Heart right ventricle (tissue), 16 donors: ENCODE measurements at regions of chr7 and their contacts with region 1.

Region 1: GRCh38 chr7:100852048-100852872 is at the start of gene SLC12A9:
- DNase-seq: peak; percentile 90 to 92
- ATAC-seq: peak; percentile 99 to 100 (median 99)
- H3K4me3 ChIP-seq: peak within 1 kb of the TSS; percentile 52 to 91 (median 72)
- H3K27ac ChIP-seq: peak within 1 kb of the TSS in 9 of 10 donors; percentile 54 to 90 (median 70)
- H3K4me1 ChIP-seq: peaks cover 8 to 21% (median 16%) of the 10 kb centered on the region in 9 donors
- H3K27me3 ChIP-seq: no peaks in the 10 kb centered on the region
- CTCF ChIP-seq: peak; percentile 76 to 99 (median 95)
- total RNA-seq, gene SLC12A9: 4.8 to 15.7 (median 6.9) TPM

Region 2: GRCh38 chr7:100705753-100706671 is 146.2 kb before region 1 on chr7 and contains the start of gene POP7:
- intact Hi-C with region 1: loop called in 9 of 10 experiments (anchors 2 to 10 kb)
- DNase-seq: peak; percentile 99
- ATAC-seq: peak; percentile 97 to 99 (median 98)
- H3K4me3 ChIP-seq: peak within 1 kb of the TSS; percentile 63 to 95 (median 77)
- H3K27ac ChIP-seq: peak within 1 kb of the TSS; percentile 84 to 99 (median 94)
- H3K4me1 ChIP-seq: peaks cover 4 to 24% (median 17%) of the 10 kb centered on the region in 9 donors
- H3K27me3 ChIP-seq: no peaks in the 10 kb centered on the region
- CTCF ChIP-seq: no peak
- total RNA-seq, gene POP7: 23.2 to 34.9 (median 25.3) TPM

Region 3: DNA sequence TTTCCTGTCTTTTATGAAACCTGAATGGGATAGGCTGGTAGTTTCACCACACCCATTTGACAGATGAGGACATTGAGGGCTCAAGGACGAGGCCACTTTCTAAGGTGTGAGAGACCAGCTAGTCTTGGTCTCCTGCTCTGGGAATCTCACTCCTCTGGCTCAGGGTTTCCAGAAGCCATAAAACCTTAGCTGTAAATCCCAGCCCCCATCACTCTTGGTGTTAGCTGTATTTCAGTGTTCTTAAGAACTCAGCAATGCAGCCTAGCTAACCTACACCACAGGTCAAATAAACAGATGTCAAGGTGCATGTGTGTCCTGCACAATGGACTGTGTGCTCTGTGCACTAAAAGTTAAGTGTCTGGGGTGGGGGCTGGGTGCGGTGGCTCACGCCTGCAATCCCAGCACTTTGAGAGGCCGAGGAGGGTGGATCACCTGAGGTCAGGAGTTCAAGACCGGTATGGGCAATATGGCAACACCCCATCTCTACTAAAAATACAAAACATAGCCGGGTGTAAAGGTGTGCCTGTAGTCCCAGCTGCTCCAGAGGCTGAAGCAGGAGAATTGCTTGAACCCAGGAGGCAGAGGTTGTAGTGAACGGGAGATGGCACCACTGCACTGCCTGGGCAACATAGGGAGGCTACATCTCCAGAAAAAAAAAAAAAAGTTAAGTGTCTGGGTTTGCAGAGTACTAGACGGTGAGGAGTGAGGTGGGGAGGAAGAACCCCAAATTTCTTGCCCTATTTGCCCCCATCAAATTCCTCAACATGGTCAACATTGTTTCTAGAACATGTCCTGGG is 132.5 kb before region 1 on chr7:
- intact Hi-C with region 1: loop called in 2 of 10 experiments (anchors 10 kb)
- DNase-seq: no peak
- ATAC-seq: no peak
- H3K4me3 ChIP-seq: no peak overlapping the region
- H3K27ac ChIP-seq: no peak overlapping the region
- H3K4me1 ChIP-seq: peaks cover 0 to 12% (median 0%) of the 10 kb centered on the region in 9 donors
- H3K27me3 ChIP-seq: peaks cover 4 to 61% (median 53%) of the 10 kb centered on the region in 7 donors
- CTCF ChIP-seq: no peak

Region 4: GRCh38 chr7:100781255-100781654 is 71.0 kb before region 1 on chr7:
- intact Hi-C with region 1: no loop called
- DNase-seq: no peak
- ATAC-seq: no peak
- H3K4me3 ChIP-seq: no peak overlapping the region
- H3K27ac ChIP-seq: no peak overlapping the region
- H3K4me1 ChIP-seq: no peaks in the 10 kb centered on the region
- H3K27me3 ChIP-seq: peaks cover 0 to 51% (median 22%) of the 10 kb centered on the region in 7 donors
- CTCF ChIP-seq: no peak

Region 5: GRCh38 chr7:100803398-100804233 is 48.6 kb before region 1 on chr7:
- intact Hi-C with region 1: loop called (anchors 1 to 5 kb)
- DNase-seq: peak; percentile 54 to 85
- ATAC-seq: peak; percentile 73 to 89 (median 82)
- H3K4me3 ChIP-seq: peak overlapping the region in 6 of 10 donors; percentile 7 to 29 (median 22)
- H3K27ac ChIP-seq: peak overlapping the region; percentile 26 to 63 (median 52)
- H3K4me1 ChIP-seq: peaks cover 18 to 62% (median 28%) of the 10 kb centered on the region in 9 donors
- H3K27me3 ChIP-seq: peaks cover 0 to 15% (median 3%) of the 10 kb centered on the region in 7 donors
- CTCF ChIP-seq: no peak

Region 6: DNA sequence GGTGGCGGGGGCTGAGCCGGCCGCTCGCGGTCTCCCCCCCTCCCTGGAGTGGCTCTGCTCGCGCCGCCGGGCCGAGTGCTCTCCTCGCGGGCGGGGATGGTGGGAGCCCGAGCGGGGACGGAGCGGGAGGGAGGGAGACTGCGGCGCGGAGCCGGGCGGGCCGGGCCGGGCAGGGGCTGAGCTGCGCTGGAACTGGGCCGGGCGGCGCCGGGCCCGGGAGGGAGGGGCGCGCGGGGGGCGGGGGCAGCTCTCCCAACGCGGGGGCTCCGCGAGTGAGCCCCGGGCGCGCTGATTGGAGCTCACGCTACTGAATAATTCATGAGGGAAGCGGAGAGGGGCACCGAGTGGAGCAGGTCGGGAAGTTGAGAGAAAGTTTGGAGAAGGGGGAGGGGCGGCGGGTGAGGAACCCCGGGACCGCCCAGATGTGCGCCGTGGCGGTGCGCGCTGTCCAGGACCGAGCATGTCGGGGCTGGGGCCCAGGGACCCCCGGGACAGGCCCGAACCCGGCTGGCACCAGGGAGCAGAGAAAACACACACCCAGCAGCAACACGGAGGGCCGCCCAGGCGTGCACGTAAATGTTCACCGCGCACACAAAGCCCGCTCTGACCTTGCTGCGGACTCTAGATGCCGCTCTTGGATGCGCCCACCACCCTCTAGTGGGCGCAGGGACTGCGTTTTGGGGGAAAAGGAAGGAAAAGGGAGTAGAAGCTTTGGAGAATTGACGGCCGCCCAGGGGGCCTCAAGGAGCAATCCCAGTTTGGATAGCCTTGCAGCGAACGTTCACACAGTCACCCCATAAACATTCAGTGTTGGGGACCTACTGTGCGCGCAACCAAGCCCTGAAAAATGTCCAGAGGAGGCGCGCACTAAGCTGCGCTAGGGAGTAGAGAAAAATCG is 24.7 kb before region 1 on chr7 and contains the start of gene EPHB4:
- intact Hi-C with region 1: loop called in 1 of 10 experiments (anchors 1 kb)
- DNase-seq: peak; percentile 84 to 90
- ATAC-seq: peak; percentile 61 to 80 (median 76)
- H3K4me3 ChIP-seq: peak within 1 kb of the TSS; percentile 42 to 89 (median 74)
- H3K27ac ChIP-seq: peak within 1 kb of the TSS; percentile 73 to 95 (median 90)
- H3K4me1 ChIP-seq: peaks cover 2 to 53% (median 33%) of the 10 kb centered on the region in 9 donors
- H3K27me3 ChIP-seq: peaks cover 0 to 45% (median 5%) of the 10 kb centered on the region in 7 donors
- CTCF ChIP-seq: peak in 7 of 9 donors; percentile 22 to 61 (median 42)
- total RNA-seq, gene EPHB4: 13.8 to 41.6 (median 21.0) TPM